Prostate gland (tissue), 2 donors: ENCODE measurements at regions of chr1 and their contacts with region 1.

Region 1: GRCh38 chr1:154272217-154272998 is at the start of gene HAX1:
- DNase-seq: peak; percentile 88
- H3K4me3 ChIP-seq: peak within 1 kb of the TSS; percentile 59 to 78
- H3K27ac ChIP-seq: peak within 1 kb of the TSS; percentile 81 to 82
- H3K4me1 ChIP-seq: peaks cover 3% of the 10 kb centered on the region
- H3K27me3 ChIP-seq: no peaks in the 10 kb centered on the region
- CTCF ChIP-seq: peak; percentile 75 to 90 (median 84)
- POLR2A ChIP-seq: peak; percentile 57
- total RNA-seq, gene HAX1: 95.2 to 96.6 TPM

Region 2: GRCh38 chr1:153796791-153797659 is 475.4 kb before region 1 on chr1:
- intact Hi-C with region 1: loop called (anchors 10 kb)
- DNase-seq: peak; percentile 85
- H3K4me3 ChIP-seq: no peak overlapping the region
- H3K27ac ChIP-seq: no peak overlapping the region
- H3K4me1 ChIP-seq: no peaks in the 10 kb centered on the region
- H3K27me3 ChIP-seq: no peaks in the 10 kb centered on the region
- CTCF ChIP-seq: peak; percentile 90 to 93 (median 91)
- POLR2A ChIP-seq: no peak

Region 3: GRCh38 chr1:154198756-154199562 is 73.4 kb before region 1 on chr1:
- intact Hi-C with region 1: loop called (anchors 5 kb)
- DNase-seq: peak; percentile 40
- H3K4me3 ChIP-seq: no peak overlapping the region
- H3K27ac ChIP-seq: peak overlapping the region; percentile 15 to 45
- H3K4me1 ChIP-seq: no peaks in the 10 kb centered on the region
- H3K27me3 ChIP-seq: no peaks in the 10 kb centered on the region
- CTCF ChIP-seq: peak; percentile 13 to 50 (median 38)
- POLR2A ChIP-seq: no peak

Region 4: GRCh38 chr1:154220071-154220969 is 52.1 kb before region 1 on chr1 and contains the start of gene UBAP2L:
- intact Hi-C with region 1: loop called (anchors 2 kb)
- DNase-seq: peak; percentile 99
- H3K4me3 ChIP-seq: peak within 1 kb of the TSS; percentile 88 to 93
- H3K27ac ChIP-seq: peak within 1 kb of the TSS; percentile 97 to 99
- H3K4me1 ChIP-seq: peaks cover 3% of the 10 kb centered on the region
- H3K27me3 ChIP-seq: no peaks in the 10 kb centered on the region
- CTCF ChIP-seq: peak in 1 of 4 experiments; percentile 2
- POLR2A ChIP-seq: peak; percentile 90
- total RNA-seq, gene UBAP2L: 51.1 to 121 TPM